WTC11 (cell line): ENCODE measurements at regions of chr10 and their contacts with region 1.

Region 1: GRCh38 chr10:104642658-104643302 is 1.7 kb downstream of the SORCS3 start:
- DNase-seq: peak; percentile 95
- ATAC-seq: peak; percentile 60
- H3K4me3 Mint-ChIP-seq: peak overlapping the region; percentile 76
- H3K27ac Mint-ChIP-seq: no peak overlapping the region
- H3K4me1 Mint-ChIP-seq: peaks cover 14% of the 10 kb centered on the region
- H3K27me3 Mint-ChIP-seq: peaks cover 84% of the 10 kb centered on the region
- CTCF ChIP-seq: peak; percentile 45

Region 2: DNA sequence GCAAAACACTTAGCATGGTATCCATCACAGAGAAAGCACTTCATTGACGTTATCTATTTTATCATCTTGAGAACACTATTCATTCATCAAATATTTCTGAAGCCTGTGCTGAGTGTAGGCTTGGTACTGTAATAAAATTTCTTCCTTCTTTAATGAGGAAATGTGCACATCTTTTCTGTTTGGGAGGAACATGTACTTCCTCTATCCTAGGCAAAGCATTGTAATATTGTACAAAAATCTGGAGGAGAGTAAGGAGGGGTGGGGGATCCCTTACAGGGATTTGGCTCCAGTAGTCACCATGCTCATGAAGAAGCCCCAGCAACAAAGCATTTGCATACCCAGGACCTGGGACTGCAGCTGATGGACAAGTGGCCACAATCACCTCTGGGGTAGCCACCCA is 41.6 kb before region 1 on chr10:
- CTCF ChIA-PET with region 1: no interaction called
- POLR2A ChIA-PET with region 1: no interaction called
- DNase-seq: no peak
- ATAC-seq: no peak
- H3K4me3 Mint-ChIP-seq: no peak overlapping the region
- H3K27ac Mint-ChIP-seq: no peak overlapping the region
- H3K4me1 Mint-ChIP-seq: peaks cover 4% of the 10 kb centered on the region; the same call in 1 of the 2 replicates
- H3K27me3 Mint-ChIP-seq: no peaks in the 10 kb centered on the region; the same call in 1 of the 2 replicates
- CTCF ChIP-seq: no peak

Region 3: GRCh38 chr10:104614245-104614831 is 28.4 kb before region 1 on chr10:
- CTCF ChIA-PET with region 1: interaction called, 10 read pairs
- POLR2A ChIA-PET with region 1: no interaction called
- DNase-seq: peak; percentile 66
- ATAC-seq: peak; percentile 83
- H3K4me3 Mint-ChIP-seq: no peak overlapping the region
- H3K27ac Mint-ChIP-seq: no peak overlapping the region
- H3K4me1 Mint-ChIP-seq: no peaks in the 10 kb centered on the region
- H3K27me3 Mint-ChIP-seq: 0 out of 2 replicates have a peak, but pooled peaks cover 2% of the 10 kb centered on the region
- CTCF ChIP-seq: peak; percentile 74

Region 4: DNA sequence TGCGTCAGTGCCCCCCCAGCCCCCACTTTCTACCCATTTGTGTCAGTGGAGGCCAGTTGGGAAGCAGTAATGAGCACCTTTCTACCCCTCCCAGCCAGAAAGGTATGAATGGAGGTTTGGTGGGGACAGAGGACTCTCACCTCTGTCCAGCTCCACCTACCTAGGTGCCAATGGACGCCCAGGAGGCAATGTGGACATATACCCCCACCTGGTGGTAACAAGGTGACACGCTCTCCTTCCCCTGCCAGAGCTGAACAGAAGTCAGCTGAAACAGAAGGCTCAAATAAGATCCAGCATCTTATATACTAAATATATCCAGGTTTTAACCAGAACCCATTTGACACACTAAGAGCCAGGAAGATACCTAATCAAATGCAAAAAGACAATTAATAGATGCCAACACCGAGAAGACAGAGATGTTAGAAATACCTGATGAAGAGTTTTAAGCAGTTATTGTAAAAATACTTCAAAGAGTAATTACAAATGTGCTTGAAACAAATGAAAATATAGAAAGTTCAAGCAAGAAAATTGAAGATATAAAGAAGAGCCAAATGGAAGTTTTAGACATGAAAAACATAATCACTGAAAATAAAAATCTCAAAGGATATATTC is 20.1 kb before region 1 on chr10:
- CTCF ChIA-PET with region 1: interaction called, 17 read pairs
- POLR2A ChIA-PET with region 1: no interaction called
- DNase-seq: peak; percentile 68
- ATAC-seq: peak; percentile 99
- H3K4me3 Mint-ChIP-seq: no peak overlapping the region
- H3K27ac Mint-ChIP-seq: no peak overlapping the region
- H3K4me1 Mint-ChIP-seq: no peaks in the 10 kb centered on the region
- H3K27me3 Mint-ChIP-seq: peaks cover 2% of the 10 kb centered on the region
- CTCF ChIP-seq: peak; percentile 56

Region 5: GRCh38 chr10:104659809-104660208 is 17.0 kb after region 1 on chr10:
- CTCF ChIA-PET with region 1: interaction called, 12 read pairs
- POLR2A ChIA-PET with region 1: no interaction called
- DNase-seq: no peak
- ATAC-seq: peak; percentile 74
- H3K4me3 Mint-ChIP-seq: no peak overlapping the region
- H3K27ac Mint-ChIP-seq: no peak overlapping the region
- H3K4me1 Mint-ChIP-seq: peaks cover 15% of the 10 kb centered on the region
- H3K27me3 Mint-ChIP-seq: no peaks in the 10 kb centered on the region
- CTCF ChIP-seq: no peak

Region 6: DNA sequence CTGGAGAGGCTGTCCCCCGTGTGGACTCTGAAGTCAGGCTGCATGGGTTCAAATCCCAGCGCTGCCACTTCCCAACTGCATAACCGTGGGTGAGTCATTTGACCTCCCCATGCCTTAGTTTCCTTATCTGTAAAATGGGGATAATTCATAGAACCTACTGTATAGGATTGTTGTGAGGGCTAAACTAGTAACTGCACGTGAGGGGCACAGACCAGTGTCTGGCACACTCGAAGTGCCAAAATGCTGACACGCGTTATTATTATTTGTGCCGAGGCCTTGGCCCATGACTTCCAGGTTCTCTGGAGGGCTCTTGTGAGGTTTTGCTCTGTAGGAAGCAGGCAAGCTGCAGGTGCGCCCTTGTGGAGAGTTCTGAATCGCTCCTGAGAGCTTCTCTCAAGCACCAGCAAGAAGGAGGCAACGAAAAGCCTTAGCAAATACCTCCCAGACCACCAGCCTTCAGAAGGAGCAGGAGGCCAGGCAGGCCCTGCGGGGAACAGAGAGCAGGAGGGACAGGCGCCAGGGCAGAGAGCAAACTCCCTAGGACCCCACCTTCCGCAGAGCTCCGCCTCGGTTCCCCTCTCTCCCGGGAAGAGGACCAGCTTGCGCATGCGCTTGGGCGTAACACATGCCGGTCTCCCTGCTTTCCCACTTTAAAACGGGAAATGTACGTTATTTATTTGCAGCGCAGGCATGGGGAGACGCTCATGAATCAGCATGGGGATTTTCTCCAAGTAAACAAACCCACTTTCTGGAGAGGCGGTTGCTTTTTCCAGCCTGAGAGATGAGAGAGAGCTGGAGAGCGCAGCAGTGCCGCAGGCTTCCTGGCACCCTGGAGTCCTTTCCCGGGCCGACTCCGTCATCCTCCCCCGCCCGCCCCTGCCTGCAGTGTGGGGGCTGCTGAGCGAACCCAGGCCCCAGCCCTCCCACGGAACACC is 38.0 kb after region 1 on chr10:
- CTCF ChIA-PET with region 1: interaction called, 12 read pairs
- POLR2A ChIA-PET with region 1: no interaction called
- DNase-seq: peak; percentile 61
- ATAC-seq: peak; percentile 92
- H3K4me3 Mint-ChIP-seq: peak overlapping the region; percentile 75
- H3K27ac Mint-ChIP-seq: peak overlapping the region; percentile 42; the same call in 1 of the 2 replicates
- H3K4me1 Mint-ChIP-seq: peaks cover 8% of the 10 kb centered on the region
- H3K27me3 Mint-ChIP-seq: peaks cover 12% of the 10 kb centered on the region
- CTCF ChIP-seq: no peak

Region 7: DNA sequence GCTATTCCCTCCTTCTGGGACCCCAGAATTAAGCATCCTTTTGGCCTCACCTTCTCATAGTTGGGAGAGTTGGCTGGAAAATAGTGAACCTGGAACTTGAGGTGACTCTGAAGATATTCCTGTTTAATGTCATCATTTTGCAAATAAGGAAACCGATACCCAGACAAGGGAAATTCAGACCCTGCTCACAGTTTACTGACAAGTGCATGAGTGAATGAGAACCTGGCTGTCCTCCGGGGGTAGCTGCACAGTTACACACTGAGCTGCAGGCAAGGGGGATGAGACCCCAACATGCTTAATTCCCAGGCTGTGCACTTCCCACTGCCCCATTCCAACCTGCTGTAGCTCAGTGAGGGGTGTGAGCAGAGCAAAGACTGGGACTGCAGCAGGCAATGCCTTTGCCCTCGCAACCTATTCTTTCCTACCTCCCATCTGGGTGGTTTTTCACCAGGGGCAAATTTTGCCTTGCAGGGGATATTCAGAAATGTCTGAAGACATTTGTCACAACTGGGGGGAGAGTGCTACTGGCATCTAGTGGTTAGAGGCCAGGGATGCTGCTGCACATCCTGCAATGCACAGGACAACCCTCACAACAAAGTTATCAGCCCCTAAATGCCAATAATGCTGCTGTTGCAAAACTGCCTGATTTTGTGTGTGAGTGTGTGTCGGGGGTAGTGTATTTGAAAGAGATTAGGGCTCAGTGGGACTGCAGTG is 134.5 kb after region 1 on chr10:
- CTCF ChIA-PET with region 1: interaction called, 11 read pairs
- POLR2A ChIA-PET with region 1: no interaction called
- DNase-seq: peak; percentile 14
- ATAC-seq: peak; percentile 66
- H3K4me3 Mint-ChIP-seq: no peak overlapping the region
- H3K27ac Mint-ChIP-seq: no peak overlapping the region
- H3K4me1 Mint-ChIP-seq: peaks cover 24% of the 10 kb centered on the region
- H3K27me3 Mint-ChIP-seq: no peaks in the 10 kb centered on the region
- CTCF ChIP-seq: no peak

Region 8: GRCh38 chr10:104925232-104925851 is 282.6 kb after region 1 on chr10:
- CTCF ChIA-PET with region 1: interaction called, 22 read pairs
- POLR2A ChIA-PET with region 1: no interaction called
- DNase-seq: peak; percentile 60
- ATAC-seq: peak; percentile 76
- H3K4me3 Mint-ChIP-seq: no peak overlapping the region
- H3K27ac Mint-ChIP-seq: no peak overlapping the region
- H3K4me1 Mint-ChIP-seq: peaks cover 17% of the 10 kb centered on the region
- H3K27me3 Mint-ChIP-seq: no peaks in the 10 kb centered on the region
- CTCF ChIP-seq: peak; percentile 59